ENCODE measurements at regions of chr3 and their contacts with region 1.

Region 1: GRCh38 chr3:94083261-94083660 is 20.4 kb downstream of the NSUN3 start:
- DNase-seq: no peak
- H3K4me3 Mint-ChIP-seq: no peak overlapping the region
- H3K27ac Mint-ChIP-seq: no peak overlapping the region
- H3K4me1 Mint-ChIP-seq: peaks cover 50% of the 10 kb centered on the region
- H3K27me3 Mint-ChIP-seq: no peaks in the 10 kb centered on the region

Region 2: DNA sequence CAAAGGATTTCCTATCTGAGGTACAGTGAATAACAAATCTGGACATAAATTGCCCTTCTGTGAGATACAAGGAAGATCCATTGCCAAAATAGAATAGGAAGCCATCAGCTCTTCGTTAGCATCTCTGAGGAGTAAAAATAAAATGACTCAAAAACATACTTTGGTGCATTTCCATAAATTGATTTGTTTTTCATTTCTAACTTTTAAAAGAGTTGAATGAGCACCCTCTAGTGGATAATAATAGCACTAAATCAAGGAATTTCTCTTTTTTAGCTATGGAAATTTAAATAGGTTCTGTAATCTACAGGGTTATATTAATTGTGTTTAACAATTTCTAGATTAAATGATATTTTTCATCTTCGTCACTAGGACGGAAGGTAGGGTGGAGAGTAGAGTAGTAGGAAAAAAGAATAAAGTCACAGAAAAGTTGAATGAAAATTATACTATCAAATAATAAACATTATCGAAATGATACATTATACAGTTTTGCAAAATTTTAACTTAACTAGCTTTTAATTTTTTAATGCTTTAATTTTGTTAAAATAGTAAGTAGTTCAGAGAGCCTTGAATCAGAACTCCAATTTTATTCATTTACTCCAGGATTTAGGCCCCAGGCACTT is 14.0 kb before region 1 on chr3:
- CTCF ChIA-PET with region 1: interaction called, 10 read pairs
- POLR2A ChIA-PET with region 1: interaction called, 3 read pairs
- DNase-seq: no peak
- H3K4me3 Mint-ChIP-seq: no peak overlapping the region
- H3K27ac Mint-ChIP-seq: no peak overlapping the region
- H3K4me1 Mint-ChIP-seq: peaks cover 70% of the 10 kb centered on the region
- H3K27me3 Mint-ChIP-seq: no peaks in the 10 kb centered on the region